ENCODE measurements at regions of chr14 and their contacts with region 1.

Region 1: GRCh38 chr14:96962337-96962736 is 165.2 kb downstream of the VRK1 start:
- DNase-seq: peak in 4 of 5 donors; percentile 50 to 68 (median 56)
- H3K4me3 ChIP-seq: peak overlapping the region in 1 of 2 donors; percentile 33
- H3K4me3 Mint-ChIP-seq: peak overlapping the region in 7 of 8 donors; percentile 55 to 87 (median 76)
- H3K27ac ChIP-seq: peak overlapping the region; percentile 30
- H3K27ac Mint-ChIP-seq: peak overlapping the region; percentile 89 to 98 (median 95)
- H3K4me1 ChIP-seq: peaks cover 73% of the 10 kb centered on the region
- H3K4me1 Mint-ChIP-seq: peaks cover 34 to 75% (median 51%) of the 10 kb centered on the region in 4 donors
- H3K27me3 ChIP-seq: no peaks in the 10 kb centered on the region
- H3K27me3 Mint-ChIP-seq: no peaks in the 10 kb centered on the region

Region 2: DNA sequence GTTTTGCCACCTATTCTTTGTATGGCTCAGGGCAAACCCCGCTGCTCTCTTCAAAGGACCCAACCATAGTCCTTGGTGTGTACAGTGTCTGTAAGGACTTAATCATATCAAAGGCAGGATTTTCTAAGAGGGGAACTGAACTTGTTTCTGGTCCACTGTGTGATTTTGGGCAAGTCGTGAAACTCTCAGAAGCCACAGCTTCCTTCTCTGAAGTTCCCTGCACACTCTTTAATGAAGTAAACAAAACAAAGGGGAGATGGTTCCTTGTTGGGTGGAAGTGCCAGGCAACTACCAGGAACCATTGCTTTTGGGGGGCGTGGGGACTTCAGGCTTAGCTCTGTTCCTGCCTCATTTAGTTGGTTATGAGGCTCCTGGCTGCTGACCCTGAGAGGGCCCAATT is 12.7 kb before region 1 on chr14:
- CTCF ChIA-PET with region 1: interaction called, 5 read pairs
- POLR2A ChIA-PET with region 1: interaction called, 26 read pairs
- intact Hi-C with region 1: no loop called
- DNase-seq: no peak
- H3K4me3 ChIP-seq: no peak overlapping the region
- H3K4me3 Mint-ChIP-seq: peak overlapping the region in 3 of 8 donors; percentile 4 to 33 (median 27)
- H3K27ac ChIP-seq: no peak overlapping the region
- H3K27ac Mint-ChIP-seq: peak overlapping the region in 6 of 7 donors; percentile 1 to 66 (median 44)
- H3K4me1 ChIP-seq: peaks cover 25% of the 10 kb centered on the region
- H3K4me1 Mint-ChIP-seq: peaks cover 18 to 35% (median 24%) of the 10 kb centered on the region in 4 donors
- H3K27me3 ChIP-seq: no peaks in the 10 kb centered on the region
- H3K27me3 Mint-ChIP-seq: no peaks in the 10 kb centered on the region

Region 3: DNA sequence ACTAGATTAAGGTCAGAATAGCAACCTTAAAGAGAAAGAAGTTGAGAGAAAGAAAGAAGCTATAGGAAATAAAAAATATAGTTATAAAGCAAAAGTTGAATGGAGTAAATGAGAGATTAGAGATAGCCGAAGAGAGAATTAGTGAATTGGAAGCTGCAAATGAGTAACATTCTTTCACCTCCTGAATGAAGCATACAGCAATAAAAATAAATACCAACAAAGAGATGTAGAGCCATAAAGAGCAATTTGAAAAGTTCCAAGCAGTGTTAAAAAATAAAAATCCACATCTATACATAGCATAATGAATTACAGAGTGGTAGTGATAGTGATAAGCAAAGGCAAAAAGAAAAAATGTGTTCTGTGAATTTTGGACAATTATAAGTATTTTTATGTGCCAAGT is 12.8 kb after region 1 on chr14:
- CTCF ChIA-PET with region 1: interaction called, 3 read pairs
- POLR2A ChIA-PET with region 1: interaction called, 10 read pairs
- intact Hi-C with region 1: no loop called
- DNase-seq: no peak
- H3K4me3 ChIP-seq: no peak overlapping the region
- H3K4me3 Mint-ChIP-seq: no peak overlapping the region
- H3K27ac ChIP-seq: no peak overlapping the region
- H3K27ac Mint-ChIP-seq: no peak overlapping the region
- H3K4me1 ChIP-seq: no peaks in the 10 kb centered on the region
- H3K4me1 Mint-ChIP-seq: peaks cover 0 to 3% (median 0%) of the 10 kb centered on the region in 4 donors
- H3K27me3 ChIP-seq: no peaks in the 10 kb centered on the region
- H3K27me3 Mint-ChIP-seq: peaks cover 2 to 6% of the 10 kb centered on the region in 2 donors

Region 4: DNA sequence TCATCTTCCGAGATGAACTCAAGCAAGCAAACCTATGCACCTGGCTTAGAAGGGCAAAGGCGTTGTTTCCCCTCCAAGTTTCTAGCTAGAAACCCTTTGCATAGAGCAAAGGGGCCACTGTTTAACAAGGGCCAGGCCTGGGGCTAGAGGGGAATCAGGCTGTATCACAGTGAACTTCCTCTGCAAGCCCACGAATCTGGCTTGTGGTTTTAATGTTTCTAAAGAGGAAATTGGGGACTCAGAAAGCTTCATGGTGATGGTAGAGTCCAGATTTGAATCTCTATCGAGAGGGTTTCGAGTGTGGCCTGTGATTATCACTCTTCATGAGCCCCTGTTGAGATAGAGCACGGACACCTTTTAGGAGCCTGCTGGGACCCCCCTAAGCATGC is 24.7 kb after region 1 on chr14:
- CTCF ChIA-PET with region 1: interaction called, 3 read pairs
- POLR2A ChIA-PET with region 1: interaction called, 4 read pairs
- intact Hi-C with region 1: loop called (anchors 2 kb)
- DNase-seq: peak in 2 of 5 donors; percentile 9 to 17
- H3K4me3 ChIP-seq: no peak overlapping the region
- H3K4me3 Mint-ChIP-seq: peak overlapping the region in 7 of 8 donors; percentile 27 to 79 (median 71)
- H3K27ac ChIP-seq: no peak overlapping the region
- H3K27ac Mint-ChIP-seq: peak overlapping the region; percentile 44 to 85 (median 79)
- H3K4me1 ChIP-seq: peaks cover 25% of the 10 kb centered on the region
- H3K4me1 Mint-ChIP-seq: peaks cover 21 to 37% (median 34%) of the 10 kb centered on the region in 4 donors
- H3K27me3 ChIP-seq: no peaks in the 10 kb centered on the region
- H3K27me3 Mint-ChIP-seq: peaks cover 0 to 1% of the 10 kb centered on the region in 2 donors